PC-3 (cell line): ENCODE measurements at regions of chr14 and their contacts with region 1.

Region 1: DNA sequence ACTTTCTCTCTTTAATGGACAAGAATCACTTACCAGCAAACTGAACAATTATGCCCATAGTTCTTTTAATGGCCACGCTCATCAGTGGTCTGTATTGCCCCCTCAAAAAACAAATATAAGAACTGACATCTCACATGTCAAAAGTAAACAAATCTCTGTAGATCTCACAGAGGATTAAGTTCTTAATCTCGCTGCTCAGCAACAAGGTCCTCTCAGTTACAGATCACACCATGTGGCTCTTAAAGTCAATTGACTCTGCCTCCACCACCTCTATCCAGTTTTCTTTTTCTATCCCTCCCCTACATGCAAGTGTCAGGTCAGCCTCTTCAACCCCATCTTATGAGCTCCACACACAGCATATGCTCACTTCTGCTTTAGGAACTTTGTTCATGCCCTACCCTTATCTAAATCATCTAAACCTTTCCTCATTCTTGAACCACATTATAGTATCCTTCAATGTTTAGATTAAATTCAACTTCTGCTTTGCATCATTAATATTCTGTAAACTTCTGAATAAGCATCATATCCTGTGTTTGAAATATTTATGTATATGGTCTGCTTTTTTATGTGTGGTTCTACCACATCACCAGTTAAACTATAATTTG is 7.2 kb downstream of the ADAM20 start:
- DNase-seq: no peak
- ATAC-seq: no peak
- H3K4me3 ChIP-seq: no peak overlapping the region
- H3K27ac ChIP-seq: no peak overlapping the region
- H3K4me1 ChIP-seq: peaks cover 5% of the 10 kb centered on the region
- H3K27me3 ChIP-seq: no peaks in the 10 kb centered on the region
- CTCF ChIP-seq: no peak

Region 2: DNA sequence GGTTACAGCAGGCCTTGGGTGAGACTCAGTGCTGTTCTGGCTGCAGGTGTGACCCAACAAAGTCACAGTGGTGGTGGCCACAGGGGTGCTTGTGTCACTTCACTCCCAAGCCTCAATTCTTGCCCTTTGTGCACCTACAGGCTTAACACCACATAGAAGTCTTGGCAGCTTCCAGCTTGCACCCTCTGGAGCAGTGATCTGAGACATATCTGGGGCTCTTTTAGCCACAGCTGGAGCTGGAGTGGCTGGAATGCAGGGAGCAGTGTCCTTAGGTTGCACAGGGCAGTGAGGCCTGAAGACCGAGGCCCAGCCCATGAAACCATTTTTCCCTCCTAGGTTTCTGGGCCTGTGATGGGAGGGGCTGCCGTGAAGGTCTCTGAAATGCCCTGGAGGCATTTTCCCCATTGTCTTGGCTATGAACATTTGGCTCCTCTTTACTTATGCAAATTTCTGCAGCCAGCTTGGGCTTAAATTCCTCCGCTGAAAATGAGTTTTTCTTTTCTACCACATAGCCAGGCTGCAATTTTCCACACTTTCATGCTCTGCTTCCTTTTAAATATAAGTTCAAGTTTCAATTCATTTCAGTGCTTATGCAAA is 37.9 kb before region 1 on chr14:
- CTCF ChIA-PET with region 1: no interaction called
- POLR2A ChIA-PET with region 1: no interaction called
- intact Hi-C with region 1: no loop called
- DNase-seq: no peak
- ATAC-seq: no peak
- H3K4me3 ChIP-seq: no peak overlapping the region
- H3K27ac ChIP-seq: no peak overlapping the region
- H3K4me1 ChIP-seq: no peaks in the 10 kb centered on the region
- H3K27me3 ChIP-seq: 0 out of 2 replicates have a peak, but pooled peaks cover 8% of the 10 kb centered on the region
- CTCF ChIP-seq: no peak

Region 3: DNA sequence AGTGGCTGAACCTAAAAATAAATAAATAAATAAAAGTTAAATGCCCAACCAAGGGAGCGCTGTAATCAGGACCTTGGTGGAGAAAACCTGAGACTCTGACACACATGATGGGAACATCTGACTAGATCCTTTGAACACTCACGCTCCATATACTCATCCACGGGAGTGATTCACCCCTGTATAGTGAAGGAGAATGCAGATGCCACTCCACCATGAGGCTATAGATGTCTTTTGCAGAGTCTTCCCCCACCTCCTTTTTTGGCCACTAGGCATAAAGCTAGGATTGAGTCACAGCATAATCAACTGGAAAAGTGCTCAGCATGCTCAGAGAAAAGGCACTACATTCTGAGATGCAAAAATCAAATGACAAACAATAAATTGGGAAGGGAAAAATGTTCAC is 11.8 kb before region 1 on chr14:
- CTCF ChIA-PET with region 1: no interaction called
- POLR2A ChIA-PET with region 1: no interaction called
- intact Hi-C with region 1: loop called (anchors 1 kb)
- DNase-seq: peak; percentile 32
- ATAC-seq: peak; percentile 36; the same call in 1 of the 2 replicates
- H3K4me3 ChIP-seq: no peak overlapping the region
- H3K27ac ChIP-seq: no peak overlapping the region
- H3K4me1 ChIP-seq: no peaks in the 10 kb centered on the region
- H3K27me3 ChIP-seq: no peaks in the 10 kb centered on the region
- CTCF ChIP-seq: no peak

Region 4: DNA sequence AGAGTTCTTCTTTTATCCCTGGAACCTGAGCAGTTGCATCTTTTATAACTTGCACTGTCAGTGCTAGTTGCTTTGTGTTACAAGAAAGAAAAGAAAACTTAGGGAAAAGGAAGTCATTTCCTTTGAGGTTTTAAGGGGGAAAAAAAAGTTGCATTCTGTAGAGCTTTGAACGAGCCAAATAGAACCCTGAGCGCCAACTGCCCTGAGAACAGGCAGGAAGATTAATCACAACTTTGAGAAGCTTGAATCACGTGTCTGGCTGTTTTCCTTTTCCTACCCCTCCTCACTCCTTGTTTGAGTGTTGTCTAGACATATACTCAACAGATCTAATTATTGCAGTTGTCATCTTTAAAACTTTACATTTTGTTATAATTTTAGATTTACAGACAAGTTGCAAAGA is 392.2 kb after region 1 on chr14:
- CTCF ChIA-PET with region 1: no interaction called
- POLR2A ChIA-PET with region 1: interaction called, 14 read pairs
- intact Hi-C with region 1: no loop called
- DNase-seq: peak; percentile 19
- ATAC-seq: peak; percentile 16
- H3K4me3 ChIP-seq: no peak overlapping the region
- H3K27ac ChIP-seq: no peak overlapping the region
- H3K4me1 ChIP-seq: peaks cover 34% of the 10 kb centered on the region
- H3K27me3 ChIP-seq: no peaks in the 10 kb centered on the region
- CTCF ChIP-seq: no peak